ENCODE measurements at regions of chr5 and their contacts with region 1.

Region 1: DNA sequence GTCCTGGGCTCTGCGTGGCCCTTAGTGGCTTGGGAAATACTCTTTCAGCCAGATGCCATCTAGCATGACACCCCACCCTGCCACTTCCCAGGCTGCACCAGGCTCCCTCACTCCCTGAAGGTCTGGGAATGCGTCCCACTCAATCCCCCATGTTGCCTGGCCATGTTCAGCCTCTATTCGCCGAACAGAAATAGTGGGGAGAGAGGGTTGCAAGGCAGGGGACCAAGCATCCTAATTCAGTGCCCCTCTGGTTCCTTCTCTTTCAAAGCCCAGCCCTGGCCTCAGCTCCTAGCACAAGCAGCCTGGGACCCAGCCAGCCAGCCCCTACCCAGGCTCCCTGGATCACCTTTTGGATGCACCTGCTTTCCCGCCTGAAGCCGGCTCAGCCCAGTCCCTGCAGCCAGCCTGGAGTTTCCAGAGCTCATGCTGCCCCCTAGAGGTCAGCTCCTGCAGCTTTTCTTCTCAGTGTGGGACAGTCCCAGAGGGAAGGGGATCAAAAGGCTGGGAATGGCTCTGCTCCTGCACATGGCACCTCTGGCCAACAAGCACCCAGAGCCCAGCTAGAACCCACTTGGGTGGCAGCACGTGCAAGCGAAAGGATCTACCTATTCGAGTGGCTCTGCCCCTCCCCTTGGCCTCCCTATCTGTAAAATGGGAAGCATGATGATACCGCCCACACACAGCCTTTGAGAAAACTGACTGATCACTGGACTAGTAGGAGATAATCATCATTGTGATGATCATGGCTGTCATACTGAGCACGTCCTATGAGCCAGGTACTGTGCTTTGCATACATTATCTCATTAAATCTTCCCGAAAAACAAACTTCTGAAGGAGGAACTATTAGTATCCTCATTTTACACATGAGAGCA is 48.7 kb upstream of the C5orf58 start:
- DNase-seq: peak; percentile 43 to 90
- H3K4me3 ChIP-seq: no peak overlapping the region
- H3K27ac ChIP-seq: no peak overlapping the region
- H3K4me1 ChIP-seq: no peaks in the 10 kb centered on the region
- H3K27me3 ChIP-seq: no peaks in the 10 kb centered on the region
- CTCF ChIP-seq: peak; percentile 82 to 96 (median 95)
- EP300 ChIP-seq: no peak; a peak in 1 of 3 replicates
- POLR2A ChIP-seq: no peak
- RAD21 ChIP-seq: peak; percentile 98 to 99

Region 2: GRCh38 chr5:170070556-170071412 is 113.3 kb before region 1 on chr5:
- CTCF ChIA-PET with region 1: interaction called, 15 read pairs
- POLR2A ChIA-PET with region 1: no interaction called
- DNase-seq: peak; percentile 17 to 90
- H3K4me3 ChIP-seq: no peak overlapping the region
- H3K27ac ChIP-seq: no peak overlapping the region
- H3K4me1 ChIP-seq: no peaks in the 10 kb centered on the region
- H3K27me3 ChIP-seq: no peaks in the 10 kb centered on the region; a peak in 1 of 7 replicates
- CTCF ChIP-seq: peak; percentile 74 to 82 (median 81)
- EP300 ChIP-seq: no peak
- POLR2A ChIP-seq: no peak
- RAD21 ChIP-seq: peak; percentile 72 to 78

Region 3: GRCh38 chr5:170100066-170100943 is 83.7 kb before region 1 on chr5:
- CTCF ChIA-PET with region 1: interaction called, 217 read pairs
- POLR2A ChIA-PET with region 1: no interaction called
- DNase-seq: peak; percentile 80 to 93
- H3K4me3 ChIP-seq: no peak overlapping the region
- H3K27ac ChIP-seq: no peak overlapping the region
- H3K4me1 ChIP-seq: peaks cover 0 to 2% (median 0%) of the 10 kb centered on the region in 4 experiments; a peak in 1 of 7 replicates
- H3K27me3 ChIP-seq: 0 out of 7 replicates have a peak, but pooled peaks cover 0 to 7% (median 0%) of the 10 kb centered on the region in 4 experiments
- CTCF ChIP-seq: peak; percentile 11 to 93 (median 68)
- EP300 ChIP-seq: no peak
- POLR2A ChIP-seq: no peak
- RAD21 ChIP-seq: peak; percentile 94 to 98

Region 4: DNA sequence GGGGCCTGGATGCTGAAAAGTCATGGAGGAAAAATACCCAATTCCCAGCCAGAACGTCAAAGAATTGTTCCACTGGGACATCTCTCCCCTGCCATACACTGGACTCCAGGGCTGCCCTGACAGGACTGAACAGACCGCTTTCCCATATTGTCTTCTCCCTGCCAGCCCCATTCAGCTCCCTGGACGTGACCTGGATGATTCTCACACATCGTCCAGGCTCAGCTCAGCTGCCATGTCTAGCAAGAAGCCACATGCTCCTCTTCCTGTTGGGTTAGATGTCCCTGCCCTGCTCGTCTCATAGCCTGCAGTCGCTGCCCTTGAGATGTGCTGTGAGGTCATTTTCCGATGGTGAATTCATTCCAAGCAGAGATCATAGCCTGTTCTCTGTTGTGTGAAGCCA is 41.0 kb before region 1 on chr5:
- CTCF ChIA-PET with region 1: interaction called, 14 read pairs
- POLR2A ChIA-PET with region 1: no interaction called
- DNase-seq: peak in 1 of 2 experiments; percentile 13
- H3K4me3 ChIP-seq: no peak overlapping the region
- H3K27ac ChIP-seq: no peak overlapping the region
- H3K4me1 ChIP-seq: no peaks in the 10 kb centered on the region
- H3K27me3 ChIP-seq: no peaks in the 10 kb centered on the region; a peak in 1 of 7 replicates
- CTCF ChIP-seq: no peak
- EP300 ChIP-seq: no peak
- POLR2A ChIP-seq: no peak
- RAD21 ChIP-seq: no peak

Region 5: DNA sequence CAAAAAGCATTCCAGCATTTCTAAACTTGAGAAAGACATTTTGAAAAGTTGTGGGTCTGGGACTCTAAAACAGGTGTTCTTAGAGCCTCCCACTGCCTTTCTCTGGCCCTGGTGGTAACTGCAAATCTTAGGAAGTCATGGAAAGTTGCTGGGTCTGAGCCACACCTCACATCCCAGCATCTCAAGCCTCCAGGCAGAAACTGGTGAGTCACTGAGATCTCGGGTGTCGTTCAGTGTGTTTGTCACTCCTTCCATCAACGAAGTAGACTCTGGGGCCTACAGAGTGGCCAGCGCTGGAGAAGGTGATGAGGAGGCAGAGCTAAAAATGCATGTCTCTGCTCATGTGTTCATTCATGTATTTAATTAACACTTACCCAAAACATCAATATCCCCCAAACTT is 10.8 kb before region 1 on chr5:
- CTCF ChIA-PET with region 1: interaction called, 42 read pairs
- POLR2A ChIA-PET with region 1: no interaction called
- DNase-seq: no peak
- H3K4me3 ChIP-seq: no peak overlapping the region
- H3K27ac ChIP-seq: no peak overlapping the region
- H3K4me1 ChIP-seq: no peaks in the 10 kb centered on the region
- H3K27me3 ChIP-seq: no peaks in the 10 kb centered on the region; a peak in 2 of 7 replicates
- CTCF ChIP-seq: no peak
- EP300 ChIP-seq: no peak
- POLR2A ChIP-seq: no peak
- RAD21 ChIP-seq: no peak

Region 6: DNA sequence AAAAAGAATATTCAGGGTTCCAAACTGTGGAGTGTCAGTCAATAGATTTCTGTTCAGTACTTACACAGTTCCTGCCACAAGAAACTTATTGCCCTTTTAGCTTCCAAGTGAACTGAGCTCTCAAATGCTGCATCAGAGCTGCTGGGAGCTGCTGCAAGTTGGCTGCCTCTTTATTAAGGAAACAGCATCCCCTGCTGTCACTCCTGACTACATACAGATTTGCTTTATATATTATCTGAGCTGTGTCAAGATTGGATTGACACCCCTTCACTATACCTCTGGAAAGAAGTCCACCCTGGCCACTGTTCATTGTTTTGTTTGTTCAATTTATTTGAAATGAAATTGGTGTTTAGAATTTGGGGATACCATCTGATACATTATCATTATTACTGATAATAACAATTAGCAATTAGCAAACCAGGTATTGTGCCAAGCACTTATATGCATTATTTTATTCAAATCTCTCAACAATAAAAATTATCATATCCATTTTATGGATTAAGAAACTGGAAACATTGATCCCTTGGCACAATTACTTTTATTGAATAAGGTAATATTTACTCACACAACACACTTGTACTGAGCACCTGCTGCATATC is 32.3 kb after region 1 on chr5:
- CTCF ChIA-PET with region 1: interaction called, 12 read pairs
- POLR2A ChIA-PET with region 1: no interaction called
- DNase-seq: no peak
- H3K4me3 ChIP-seq: no peak overlapping the region
- H3K27ac ChIP-seq: no peak overlapping the region
- H3K4me1 ChIP-seq: peaks cover 0 to 6% (median 1%) of the 10 kb centered on the region in 4 experiments; a peak in 2 of 7 replicates
- H3K27me3 ChIP-seq: peaks cover 0 to 19% (median 5%) of the 10 kb centered on the region in 4 experiments; a peak in 5 of 7 replicates
- CTCF ChIP-seq: peak; percentile 22 to 83 (median 76)
- EP300 ChIP-seq: no peak
- POLR2A ChIP-seq: no peak
- RAD21 ChIP-seq: peak; percentile 97

Measured in H1 (cell line).